Astrocyte of the cerebellum (primary cell): ENCODE measurements at regions of chr6 and their contacts with region 1.

Region 1: GRCh38 chr6:51147756-51148155 is 329.1 kb downstream of the TFAP2B start:
- DNase-seq: no peak
- H3K4me3 ChIP-seq: no peak overlapping the region
- CTCF ChIP-seq: no peak

Region 2: DNA sequence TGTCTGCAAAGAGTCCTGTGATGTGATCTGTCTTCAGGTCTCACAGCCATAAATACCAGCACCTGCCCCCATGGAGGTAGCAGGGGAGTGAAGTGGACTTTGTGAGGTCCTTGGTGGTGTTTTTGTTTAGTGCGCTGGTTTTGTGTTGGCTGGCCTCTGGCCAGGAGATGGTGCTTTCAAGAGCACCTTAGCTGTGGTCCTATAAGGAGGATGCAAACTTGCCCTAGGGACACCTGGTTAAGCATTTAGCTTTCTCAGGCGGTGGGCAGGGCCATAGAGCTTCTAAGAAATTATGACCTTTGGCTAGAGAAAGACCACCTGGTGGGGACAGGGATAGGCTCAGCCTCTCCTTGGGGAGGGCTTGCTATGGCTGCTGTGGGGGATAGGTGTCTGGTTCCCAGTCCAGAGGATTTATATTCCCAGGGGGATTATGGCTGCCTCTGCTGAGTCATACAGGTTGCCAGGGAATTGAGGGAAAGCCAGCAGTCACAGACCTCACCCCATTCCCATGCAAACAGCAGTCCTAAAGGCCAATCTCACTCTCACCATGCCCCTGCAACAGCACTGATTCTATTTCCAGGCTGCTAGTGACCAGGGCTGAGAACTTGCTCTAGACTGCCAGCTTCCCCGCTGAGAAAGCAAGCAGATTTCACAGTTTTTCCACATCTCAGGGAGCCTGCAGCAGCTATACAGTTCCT is 69.8 kb before region 1 on chr6:
- in situ Hi-C with region 1: loop called (anchors 5 kb)
- DNase-seq: no peak
- H3K4me3 ChIP-seq: no peak overlapping the region
- CTCF ChIP-seq: no peak

Region 3: DNA sequence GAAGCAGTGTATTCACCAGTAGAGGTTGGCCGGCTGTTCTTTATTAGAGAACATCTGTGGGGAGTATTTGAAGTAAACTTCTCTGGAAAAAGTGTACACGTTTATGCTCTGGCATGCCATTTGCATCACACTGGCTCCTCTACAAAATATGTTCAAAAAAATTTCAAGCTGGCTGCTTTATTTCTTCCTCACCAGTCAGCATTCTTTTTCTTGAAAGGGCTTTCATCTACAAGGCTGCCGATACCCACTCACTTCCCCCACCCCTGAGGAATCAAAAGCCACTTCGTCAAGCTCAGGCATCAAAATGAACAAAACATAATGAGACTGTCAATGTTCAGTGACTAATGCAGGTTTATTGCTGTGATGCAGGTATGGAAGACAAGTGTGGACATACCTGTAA is 35.0 kb before region 1 on chr6:
- in situ Hi-C with region 1: no loop called
- DNase-seq: no peak
- H3K4me3 ChIP-seq: no peak overlapping the region
- CTCF ChIP-seq: no peak

Region 4: DNA sequence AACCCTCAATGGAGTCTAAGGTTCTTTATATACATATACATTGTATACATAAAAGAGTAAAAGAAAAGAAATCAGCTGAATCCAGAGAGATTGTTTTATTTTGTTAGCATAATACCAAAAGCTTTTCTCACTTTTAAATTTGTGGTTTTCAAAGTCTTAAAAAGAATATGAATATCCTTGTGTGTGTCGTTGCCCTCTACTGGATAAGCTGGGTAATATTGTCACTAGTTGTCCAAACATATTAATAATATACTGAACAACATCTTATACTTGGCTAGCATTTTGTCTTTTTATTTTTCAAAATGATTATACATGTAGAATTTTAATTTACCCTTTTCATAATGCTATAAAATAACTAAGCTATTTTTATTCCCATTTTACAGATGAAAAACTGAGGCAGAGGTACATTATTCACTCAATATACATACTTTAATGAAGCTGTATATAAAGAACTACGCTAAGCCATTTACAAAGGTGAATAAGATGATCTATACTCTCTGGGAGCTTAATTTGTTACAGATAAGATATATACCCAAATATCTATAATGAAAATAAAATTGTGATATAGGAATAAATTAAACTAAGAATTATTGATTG is 202.7 kb after region 1 on chr6:
- in situ Hi-C with region 1: no loop called
- DNase-seq: peak; percentile 3
- H3K4me3 ChIP-seq: no peak overlapping the region
- CTCF ChIP-seq: no peak